HCT116 (cell line): ENCODE measurements at regions of chr4 and their contacts with region 1.

Region 1: DNA sequence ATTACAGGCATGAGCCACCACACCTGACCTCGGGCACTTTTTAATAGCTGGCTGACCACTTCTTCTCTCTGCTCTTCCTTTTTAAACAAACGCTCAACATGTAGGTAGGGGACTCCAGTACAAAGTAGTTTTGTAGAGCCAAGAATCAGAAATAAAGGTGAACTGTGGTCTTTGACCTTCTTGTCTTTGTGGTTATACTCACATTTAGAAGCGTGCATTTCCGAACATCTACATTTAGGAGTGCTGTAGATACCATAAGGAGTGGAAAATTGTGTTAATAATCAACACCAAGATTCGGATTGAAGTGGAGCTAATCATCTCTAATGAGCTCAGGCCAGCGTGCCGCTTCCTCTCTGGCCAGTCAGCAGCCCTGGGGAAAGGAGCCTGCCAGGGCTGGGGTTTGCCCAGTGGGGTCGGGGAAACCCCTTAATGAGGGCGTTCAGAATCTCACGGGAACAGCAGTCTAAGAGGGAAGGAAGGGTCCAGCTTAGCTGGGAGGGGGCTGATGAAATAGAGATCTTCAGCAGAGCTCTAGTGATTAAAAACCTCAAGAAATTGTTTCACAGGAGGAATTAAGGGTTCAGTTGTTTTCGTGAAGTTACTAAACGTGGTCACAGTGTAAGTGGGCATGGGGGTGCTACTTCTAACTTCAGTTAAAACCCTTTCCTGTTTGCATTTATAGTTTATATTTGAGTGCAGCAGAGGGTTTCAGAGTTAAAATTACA is 81.2 kb downstream of the GAB1 start:
- DNase-seq: no peak
- ATAC-seq: no peak
- H3K4me3 ChIP-seq: no peak overlapping the region
- H3K27ac ChIP-seq: no peak overlapping the region
- H3K4me1 ChIP-seq: no peaks in the 10 kb centered on the region
- H3K27me3 ChIP-seq: no peaks in the 10 kb centered on the region
- CTCF ChIP-seq: no peak
- POLR2A ChIP-seq: no peak
- RAD21 ChIP-seq: no peak

Region 2: DNA sequence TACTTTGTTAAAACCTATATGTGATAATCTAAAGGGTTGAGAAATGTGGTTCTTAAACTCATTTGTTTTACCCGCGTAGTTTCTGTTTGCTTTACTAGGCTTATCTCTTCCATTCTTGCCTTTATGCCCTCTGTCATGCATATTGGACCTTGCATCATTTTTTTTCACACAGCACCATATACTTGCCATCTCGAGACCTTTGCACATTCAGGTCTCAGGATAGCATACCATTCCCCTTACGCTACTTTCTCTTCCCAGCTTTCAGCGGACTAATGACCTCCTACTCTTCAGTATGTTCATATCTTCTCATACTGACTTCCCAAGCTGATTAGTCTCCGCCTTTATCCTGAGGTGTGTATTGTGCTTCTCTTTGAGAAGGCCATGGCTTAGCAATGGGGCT is 192.7 kb before region 1 on chr4:
- CTCF ChIA-PET with region 1: no interaction called
- POLR2A ChIA-PET with region 1: no interaction called
- RAD21 ChIA-PET with region 1: no interaction called
- intact Hi-C with region 1: loop called (anchors 5 kb)
- DNase-seq: no peak
- ATAC-seq: no peak
- H3K4me3 ChIP-seq: no peak overlapping the region
- H3K27ac ChIP-seq: no peak overlapping the region
- H3K4me1 ChIP-seq: no peaks in the 10 kb centered on the region
- H3K27me3 ChIP-seq: no peaks in the 10 kb centered on the region
- CTCF ChIP-seq: no peak
- POLR2A ChIP-seq: no peak
- RAD21 ChIP-seq: no peak